ENCODE measurements at regions of chr13 and their contacts with region 1.

Region 1: GRCh38 chr13:49606747-49607648 is 21.3 kb upstream of the ARL11 start:
- DNase-seq: peak; percentile 88 to 95 (median 93)
- ATAC-seq: peak; percentile 97 to 98
- H3K4me3 ChIP-seq: peak overlapping the region; percentile 49
- H3K27ac ChIP-seq: no peak overlapping the region
- H3K4me1 ChIP-seq: no peaks in the 10 kb centered on the region
- H3K27me3 ChIP-seq: no peaks in the 10 kb centered on the region

Region 2: DNA sequence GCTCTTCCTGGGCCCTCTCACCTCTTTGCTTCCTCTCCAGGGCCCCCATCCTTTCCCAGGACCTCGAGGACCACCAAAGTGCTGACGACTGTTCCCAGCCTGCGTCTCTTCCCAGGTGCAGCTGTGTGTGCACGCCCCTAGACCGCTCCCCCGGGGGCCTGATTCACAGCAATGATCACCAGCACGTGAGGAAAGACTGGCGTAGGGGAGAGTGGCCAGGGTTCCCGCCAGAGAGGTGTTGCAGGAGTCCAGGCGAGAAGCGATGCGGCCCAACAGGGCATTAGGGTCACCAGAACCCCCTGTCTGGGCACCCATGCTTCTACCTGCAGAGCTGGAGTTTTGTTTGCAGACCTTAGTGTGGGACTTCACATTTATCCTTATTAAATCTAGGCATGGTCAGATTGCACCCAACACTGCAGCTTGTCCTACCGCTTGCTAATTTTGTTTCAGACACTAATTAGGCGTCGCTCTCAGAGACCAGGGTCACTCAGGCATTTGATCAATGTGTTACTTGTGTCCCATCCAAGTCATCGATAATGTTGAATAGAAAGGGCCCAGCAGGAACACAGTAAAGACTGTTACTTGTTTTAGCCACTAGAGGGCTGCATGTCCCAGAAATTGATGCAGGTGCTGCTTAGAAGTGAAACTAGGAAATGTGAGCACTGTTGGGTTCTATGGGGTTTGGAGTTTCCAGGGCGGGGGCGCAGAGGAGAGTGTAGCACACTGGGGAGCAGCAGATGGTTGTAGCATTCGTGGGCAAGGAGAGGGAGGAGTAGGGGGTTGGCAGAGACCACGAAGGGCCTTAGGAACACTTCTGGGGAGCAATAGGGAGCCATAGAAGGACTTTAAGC is 306.0 kb before region 1 on chr13:
- intact Hi-C with region 1: loop called in 2 of 4 experiments (anchors 5 kb)
- DNase-seq: peak; percentile 46 to 79 (median 70)
- ATAC-seq: peak; percentile 71 to 74
- H3K4me3 ChIP-seq: no peak overlapping the region
- H3K27ac ChIP-seq: no peak overlapping the region
- H3K4me1 ChIP-seq: peaks cover 6% of the 10 kb centered on the region
- H3K27me3 ChIP-seq: no peaks in the 10 kb centered on the region

Region 3: GRCh38 chr13:49443704-49444523 is 163.1 kb before region 1 on chr13 and contains the starts of genes CAB39L and SETDB2:
- intact Hi-C with region 1: loop called in 1 of 4 experiments (anchors 10 kb)
- DNase-seq: peak; percentile 99 to 100 (median 99)
- ATAC-seq: peak; percentile 99 to 100
- H3K4me3 ChIP-seq: peak within 1 kb of the TSS; percentile 69
- H3K27ac ChIP-seq: peak within 1 kb of the TSS; percentile 91
- H3K4me1 ChIP-seq: no peaks in the 10 kb centered on the region
- H3K27me3 ChIP-seq: no peaks in the 10 kb centered on the region
- total RNA-seq, gene CAB39L: 24.6 to 31.7 (median 28.2) TPM
- total RNA-seq, gene SETDB2: 13.1 to 18.6 (median 16.0) TPM

Region 4: GRCh38 chr13:49472186-49472585 is 134.8 kb before region 1 on chr13:
- intact Hi-C with region 1: no loop called
- DNase-seq: no peak
- ATAC-seq: no peak
- H3K4me3 ChIP-seq: no peak overlapping the region
- H3K27ac ChIP-seq: no peak overlapping the region
- H3K4me1 ChIP-seq: no peaks in the 10 kb centered on the region
- H3K27me3 ChIP-seq: no peaks in the 10 kb centered on the region

Region 5: GRCh38 chr13:49540552-49540951 is 66.4 kb before region 1 on chr13:
- intact Hi-C with region 1: loop called in 1 of 4 experiments (anchors 10 kb)
- DNase-seq: no peak
- ATAC-seq: peak in 1 of 2 donors; percentile 52
- H3K4me3 ChIP-seq: peak overlapping the region; percentile 18
- H3K27ac ChIP-seq: peak overlapping the region; percentile 56
- H3K4me1 ChIP-seq: no peaks in the 10 kb centered on the region
- H3K27me3 ChIP-seq: no peaks in the 10 kb centered on the region

Measured in right cardiac atrium (tissue), 5 donors.